MCF 10A (cell line): ENCODE measurements at regions of chr2 and their contacts with region 1.

Region 1: DNA sequence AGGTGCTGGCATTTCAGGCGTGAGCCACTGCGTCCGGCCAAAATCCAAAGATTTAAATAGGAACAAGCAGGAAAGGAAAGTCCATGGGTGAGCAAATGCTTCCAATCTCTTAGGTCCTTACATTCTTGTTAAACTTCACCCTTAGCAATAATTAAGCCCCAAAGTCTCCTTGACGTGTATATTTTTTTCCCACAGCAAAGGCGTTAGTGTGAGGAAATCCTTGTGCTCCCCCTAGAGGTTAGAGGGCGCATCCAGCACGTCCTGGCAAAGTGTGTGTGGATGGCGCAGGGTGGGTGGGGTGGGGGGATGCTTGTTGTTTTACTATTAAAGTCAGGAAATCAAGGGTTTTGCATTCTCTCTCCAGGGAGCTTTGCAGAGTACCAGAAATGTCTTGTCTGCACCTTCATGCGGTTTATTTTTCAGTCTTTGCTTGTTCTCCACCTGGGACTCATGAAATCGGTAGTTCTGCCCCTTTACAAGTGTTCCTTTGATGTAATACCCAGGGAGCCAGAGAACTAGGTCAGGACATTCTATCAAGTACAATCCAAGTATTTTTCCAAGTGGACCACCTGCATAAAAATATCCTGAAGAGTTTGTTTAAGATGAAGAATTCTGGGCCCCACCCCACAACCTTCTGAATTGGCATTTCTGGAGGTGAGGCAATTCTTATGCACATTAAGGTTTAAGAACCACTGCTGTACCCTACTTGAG is 22.2 kb upstream of the ITSN2 start:
- DNase-seq: peak; percentile 76
- H3K4me3 Mint-ChIP-seq: no peak overlapping the region
- H3K27ac Mint-ChIP-seq: no peak overlapping the region
- H3K4me1 Mint-ChIP-seq: peaks cover 10% of the 10 kb centered on the region
- H3K27me3 Mint-ChIP-seq: no peaks in the 10 kb centered on the region
- CTCF ChIP-seq: peak; percentile 68

Region 2: DNA sequence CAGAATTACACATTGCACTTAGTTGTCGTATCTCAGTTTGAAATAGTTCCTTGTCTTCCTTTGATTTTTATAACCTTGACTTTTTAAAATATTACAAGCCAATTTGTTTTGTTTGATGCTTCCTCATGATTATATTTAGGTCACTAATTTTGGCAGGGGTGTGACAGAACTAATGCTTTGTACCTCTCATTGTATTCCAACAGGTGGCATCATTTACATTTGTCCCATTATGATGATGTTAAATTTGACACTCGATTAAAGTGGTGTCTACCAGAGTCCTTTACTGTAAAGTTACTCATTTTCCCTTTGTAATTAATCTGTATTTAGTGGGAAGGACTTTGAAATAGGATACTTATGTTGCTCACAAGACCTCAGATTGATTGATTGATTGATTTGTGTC is 394.1 kb before region 1 on chr2:
- CTCF ChIA-PET with region 1: no interaction called
- POLR2A ChIA-PET with region 1: no interaction called
- intact Hi-C with region 1: loop called (anchors 10 kb)
- DNase-seq: peak; percentile 54
- H3K4me3 Mint-ChIP-seq: no peak overlapping the region
- H3K27ac Mint-ChIP-seq: no peak overlapping the region
- H3K4me1 Mint-ChIP-seq: peaks cover 13% of the 10 kb centered on the region
- H3K27me3 Mint-ChIP-seq: no peaks in the 10 kb centered on the region
- CTCF ChIP-seq: peak; percentile 62

Region 3: DNA sequence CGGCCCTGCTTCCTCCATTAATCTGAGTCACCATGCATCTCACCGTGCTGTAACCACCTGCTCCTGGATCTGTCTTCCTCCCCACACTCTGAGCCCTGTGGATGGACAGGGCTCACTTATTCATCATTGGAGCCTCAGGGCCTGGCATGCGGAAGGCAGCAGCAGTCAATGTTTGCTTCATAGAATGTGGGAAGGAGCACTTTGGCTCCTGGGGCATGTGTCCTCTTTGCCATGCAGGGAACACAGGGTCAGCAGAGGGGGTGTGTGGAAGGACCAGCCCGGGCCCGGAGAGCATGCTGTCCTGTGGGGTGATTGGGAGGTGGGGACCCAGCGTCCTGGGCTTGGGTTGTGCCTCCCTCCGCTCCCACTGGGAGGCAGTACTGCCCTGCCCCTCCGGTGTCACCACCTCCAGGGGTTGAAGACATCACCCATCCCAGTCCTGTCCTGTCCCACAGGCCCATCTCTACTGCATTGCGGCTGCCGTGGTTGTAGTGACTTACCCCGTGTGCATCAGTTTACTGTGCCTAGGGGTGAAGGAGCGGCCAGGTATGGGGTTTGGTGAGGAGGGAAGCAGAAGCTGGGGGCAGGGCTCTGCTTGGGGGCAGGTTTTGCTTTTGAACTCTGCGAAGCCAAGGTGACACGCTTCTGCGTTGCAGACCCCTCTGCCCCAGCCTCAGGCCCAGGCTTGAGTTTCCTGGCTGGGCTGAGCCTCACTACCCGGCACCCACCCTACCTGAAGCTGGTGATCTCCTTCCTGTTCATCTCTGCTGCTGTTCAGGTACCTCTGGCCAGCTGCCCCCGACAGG is 361.1 kb before region 1 on chr2:
- CTCF ChIA-PET with region 1: no interaction called
- POLR2A ChIA-PET with region 1: no interaction called
- intact Hi-C with region 1: loop called (anchors 1 kb)
- DNase-seq: peak; percentile 79
- H3K4me3 Mint-ChIP-seq: no peak overlapping the region
- H3K27ac Mint-ChIP-seq: peak overlapping the region; percentile 38
- H3K4me1 Mint-ChIP-seq: peaks cover 13% of the 10 kb centered on the region
- H3K27me3 Mint-ChIP-seq: no peaks in the 10 kb centered on the region
- CTCF ChIP-seq: peak; percentile 51

Region 4: GRCh38 chr2:24228470-24228869 is 154.0 kb before region 1 on chr2:
- CTCF ChIA-PET with region 1: interaction called, 4 read pairs
- POLR2A ChIA-PET with region 1: no interaction called
- intact Hi-C with region 1: loop called (anchors 1 kb)
- DNase-seq: peak; percentile 23
- H3K4me3 Mint-ChIP-seq: no peak overlapping the region
- H3K27ac Mint-ChIP-seq: no peak overlapping the region
- H3K4me1 Mint-ChIP-seq: no peaks in the 10 kb centered on the region
- H3K27me3 Mint-ChIP-seq: no peaks in the 10 kb centered on the region
- CTCF ChIP-seq: peak; percentile 33